ENCODE measurements at regions of chr13 and their contacts with region 1.

Region 1: GRCh38 chr13:22837980-22838647 is 342.7 kb upstream of the SGCG start:
- DNase-seq: no peak
- ATAC-seq: no peak
- H3K4me3 ChIP-seq: no peak overlapping the region
- H3K27ac ChIP-seq: no peak overlapping the region
- H3K4me1 ChIP-seq: no peaks in the 10 kb centered on the region
- H3K27me3 ChIP-seq: no peaks in the 10 kb centered on the region
- CTCF ChIP-seq: no peak
- POLR2A ChIP-seq: no peak
- RAD21 ChIP-seq: no peak

Region 2: GRCh38 chr13:22862478-22862877 is 24.4 kb after region 1 on chr13:
- CTCF ChIA-PET with region 1: no interaction called
- POLR2A ChIA-PET with region 1: no interaction called
- dilution Hi-C with region 1: no loop called
- in situ Hi-C with region 1: no loop called
- intact Hi-C with region 1: no loop called
- DNase-seq: no peak
- ATAC-seq: no peak
- H3K4me3 ChIP-seq: no peak overlapping the region
- H3K27ac ChIP-seq: no peak overlapping the region
- H3K4me1 ChIP-seq: no peaks in the 10 kb centered on the region
- H3K27me3 ChIP-seq: no peaks in the 10 kb centered on the region
- CTCF ChIP-seq: no peak
- POLR2A ChIP-seq: no peak
- RAD21 ChIP-seq: no peak

Region 3: GRCh38 chr13:22948421-22948820 is 110.3 kb after region 1 on chr13:
- CTCF ChIA-PET with region 1: no interaction called
- POLR2A ChIA-PET with region 1: no interaction called
- dilution Hi-C with region 1: no loop called
- in situ Hi-C with region 1: no loop called
- intact Hi-C with region 1: no loop called
- DNase-seq: no peak
- ATAC-seq: no peak
- H3K4me3 ChIP-seq: no peak overlapping the region
- H3K27ac ChIP-seq: no peak overlapping the region
- H3K4me1 ChIP-seq: no peaks in the 10 kb centered on the region
- H3K27me3 ChIP-seq: no peaks in the 10 kb centered on the region
- CTCF ChIP-seq: no peak
- POLR2A ChIP-seq: no peak
- RAD21 ChIP-seq: no peak

Region 4: DNA sequence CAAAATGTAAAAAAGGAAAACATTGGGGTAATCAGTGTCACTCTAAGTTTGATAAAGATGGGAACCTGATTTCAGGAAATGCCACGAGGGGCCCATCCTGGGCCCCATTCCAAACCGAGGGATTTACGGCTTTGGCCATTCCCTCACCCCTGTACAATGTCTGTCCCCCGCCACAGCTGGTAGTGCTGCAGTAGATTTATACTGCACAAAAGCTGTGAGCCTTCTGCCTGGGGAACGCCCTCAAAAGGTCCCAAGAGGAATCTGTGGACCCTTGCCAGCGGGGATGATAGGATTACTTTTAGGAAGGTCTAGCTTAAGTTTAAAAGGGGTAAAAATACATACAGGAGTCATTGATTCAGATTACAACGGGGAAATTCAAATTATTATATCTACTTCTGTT is 169.3 kb after region 1 on chr13:
- CTCF ChIA-PET with region 1: no interaction called
- POLR2A ChIA-PET with region 1: no interaction called
- dilution Hi-C with region 1: no loop called
- in situ Hi-C with region 1: no loop called
- intact Hi-C with region 1: no loop called
- DNase-seq: no peak
- ATAC-seq: no peak
- H3K4me3 ChIP-seq: no peak overlapping the region
- H3K27ac ChIP-seq: no peak overlapping the region
- H3K4me1 ChIP-seq: no peaks in the 10 kb centered on the region
- H3K27me3 ChIP-seq: no peaks in the 10 kb centered on the region
- CTCF ChIP-seq: no peak
- POLR2A ChIP-seq: no peak
- RAD21 ChIP-seq: no peak

Region 5: DNA sequence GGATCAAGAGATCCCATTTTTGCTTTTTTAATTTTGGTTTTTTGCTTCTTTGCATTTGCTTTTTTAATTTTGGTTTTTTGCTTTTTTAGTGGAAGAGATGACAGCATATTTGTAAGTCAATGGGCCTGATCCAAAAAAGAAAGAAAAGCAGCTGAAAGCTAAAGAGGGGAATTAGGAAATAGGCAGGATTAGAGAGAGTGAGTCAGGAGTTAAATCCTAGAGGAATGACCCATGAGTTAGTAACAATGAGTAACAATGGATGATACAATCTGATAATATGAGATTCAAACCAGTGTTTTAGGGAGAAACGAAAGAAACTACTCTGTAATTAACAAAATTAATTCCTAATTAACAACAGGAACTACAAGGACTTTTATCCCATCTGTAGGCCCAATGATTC is 231.5 kb after region 1 on chr13:
- CTCF ChIA-PET with region 1: no interaction called
- POLR2A ChIA-PET with region 1: interaction called, 13 read pairs
- dilution Hi-C with region 1: no loop called
- in situ Hi-C with region 1: no loop called
- intact Hi-C with region 1: no loop called
- DNase-seq: peak; percentile 87
- ATAC-seq: peak; percentile 91
- H3K4me3 ChIP-seq: no peak overlapping the region
- H3K27ac ChIP-seq: no peak overlapping the region
- H3K4me1 ChIP-seq: peaks cover 1% of the 10 kb centered on the region; the same call in 1 of the 2 replicates
- H3K27me3 ChIP-seq: no peaks in the 10 kb centered on the region
- CTCF ChIP-seq: no peak
- POLR2A ChIP-seq: no peak
- RAD21 ChIP-seq: no peak

Region 6: GRCh38 chr13:23723471-23723870 is 885.4 kb after region 1 on chr13:
- CTCF ChIA-PET with region 1: no interaction called
- POLR2A ChIA-PET with region 1: no interaction called
- dilution Hi-C with region 1: no loop called
- in situ Hi-C with region 1: no loop called
- intact Hi-C with region 1: no loop called
- DNase-seq: peak; percentile 78
- ATAC-seq: peak; percentile 83
- H3K4me3 ChIP-seq: no peak overlapping the region
- H3K27ac ChIP-seq: peak overlapping the region; percentile 90
- H3K4me1 ChIP-seq: peaks cover 24% of the 10 kb centered on the region
- H3K27me3 ChIP-seq: no peaks in the 10 kb centered on the region
- CTCF ChIP-seq: peak; percentile 13; the same call in 1 of the 2 replicates
- POLR2A ChIP-seq: no peak
- RAD21 ChIP-seq: peak; percentile 22; the same call in 1 of the 2 replicates

Measured in IMR-90 (cell line).